HEK293T (cell line): ENCODE measurements at regions of chr9 and their contacts with region 1.

Region 1: DNA sequence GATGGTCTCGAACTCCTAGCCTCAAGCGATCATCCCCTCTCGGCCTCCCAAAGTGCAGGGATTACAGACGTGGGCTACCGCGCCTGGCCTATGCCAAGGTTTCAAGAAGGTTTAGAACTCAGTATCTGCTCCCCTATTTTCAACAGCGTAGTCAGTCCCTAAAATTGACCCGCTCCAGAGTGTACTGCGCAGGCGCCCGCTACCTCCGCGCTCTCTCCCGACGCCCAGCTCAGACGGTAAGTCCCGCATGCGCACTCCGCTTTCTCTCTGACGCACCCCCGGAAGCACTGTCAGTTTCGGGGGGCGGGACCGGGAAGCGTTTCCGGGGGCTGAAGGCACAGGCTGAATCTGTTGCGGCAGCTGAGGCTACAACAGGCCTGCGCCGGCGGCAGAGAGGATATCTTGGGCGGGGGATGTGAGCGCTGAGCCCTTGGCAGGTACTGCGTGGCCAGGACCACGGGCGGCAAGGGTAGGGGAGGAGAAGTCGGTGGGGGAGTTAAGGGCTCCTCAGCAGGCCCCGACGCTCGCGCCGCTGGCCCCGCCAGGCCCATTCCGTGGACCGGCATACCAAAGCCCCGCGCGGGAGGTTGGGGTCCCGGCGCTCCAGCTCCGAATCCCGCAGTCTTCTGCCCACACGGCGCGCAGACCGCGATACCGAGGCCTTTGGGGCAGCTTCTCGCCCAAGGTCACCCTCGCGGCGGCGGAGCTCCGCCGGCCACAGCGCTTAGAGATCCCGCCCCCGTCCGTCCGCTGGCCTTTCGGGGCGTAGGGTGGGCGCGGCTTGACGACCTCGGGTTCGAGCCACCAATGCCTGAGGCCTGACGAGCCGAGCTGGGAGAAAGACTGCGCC is at the start of gene ZBTB43:
- DNase-seq: peak; percentile 99

Region 2: GRCh38 chr9:126791406-126792151 is 13.3 kb before region 1 on chr9:
- CTCF ChIA-PET with region 1: no interaction called
- POLR2A ChIA-PET with region 1: interaction called, 21 read pairs
- DNase-seq: peak; percentile 49